Lower lobe of right lung (tissue), 2 donors: ENCODE measurements at regions of chr4 and their contacts with region 1.

Region 1: DNA sequence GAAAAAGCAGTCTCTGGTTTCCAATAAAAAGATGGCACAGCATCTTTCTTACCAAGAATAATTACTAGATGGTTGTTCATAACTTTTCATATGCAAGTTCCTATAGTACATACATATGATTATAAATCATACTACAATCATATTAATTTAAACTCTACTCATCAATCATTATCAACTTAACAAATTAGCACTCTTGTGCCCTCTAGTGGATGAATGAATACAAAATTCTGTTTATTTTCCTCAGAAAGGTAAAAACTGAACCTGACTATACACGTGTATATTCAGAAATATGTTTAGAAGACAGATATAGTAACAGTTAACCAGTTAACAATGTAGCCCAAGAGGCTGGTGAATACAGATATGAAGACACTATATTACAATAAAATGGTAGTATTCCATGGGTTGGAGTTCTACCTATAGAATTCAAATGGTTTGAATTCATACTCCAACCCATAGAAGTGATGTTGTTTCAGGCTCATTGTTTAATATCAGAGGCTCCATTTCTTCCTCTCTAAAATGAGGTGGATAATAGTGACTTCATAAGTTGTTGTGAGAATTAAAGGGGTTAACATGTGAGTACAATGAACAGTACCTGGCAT is 100.0 kb downstream of the ADAMTS3 start:
- DNase-seq: no peak
- ATAC-seq: no peak
- H3K4me3 ChIP-seq: no peak overlapping the region
- H3K27ac ChIP-seq: no peak overlapping the region
- H3K4me1 ChIP-seq: no peaks in the 10 kb centered on the region
- H3K27me3 ChIP-seq: no peaks in the 10 kb centered on the region
- CTCF ChIP-seq: peak; percentile 51

Region 2: GRCh38 chr4:72194046-72194445 is 275.0 kb before region 1 on chr4:
- intact Hi-C with region 1: no loop called
- DNase-seq: no peak
- ATAC-seq: no peak
- H3K4me3 ChIP-seq: no peak overlapping the region
- H3K27ac ChIP-seq: no peak overlapping the region
- H3K4me1 ChIP-seq: no peaks in the 10 kb centered on the region
- H3K27me3 ChIP-seq: no peaks in the 10 kb centered on the region
- CTCF ChIP-seq: no peak

Region 3: DNA sequence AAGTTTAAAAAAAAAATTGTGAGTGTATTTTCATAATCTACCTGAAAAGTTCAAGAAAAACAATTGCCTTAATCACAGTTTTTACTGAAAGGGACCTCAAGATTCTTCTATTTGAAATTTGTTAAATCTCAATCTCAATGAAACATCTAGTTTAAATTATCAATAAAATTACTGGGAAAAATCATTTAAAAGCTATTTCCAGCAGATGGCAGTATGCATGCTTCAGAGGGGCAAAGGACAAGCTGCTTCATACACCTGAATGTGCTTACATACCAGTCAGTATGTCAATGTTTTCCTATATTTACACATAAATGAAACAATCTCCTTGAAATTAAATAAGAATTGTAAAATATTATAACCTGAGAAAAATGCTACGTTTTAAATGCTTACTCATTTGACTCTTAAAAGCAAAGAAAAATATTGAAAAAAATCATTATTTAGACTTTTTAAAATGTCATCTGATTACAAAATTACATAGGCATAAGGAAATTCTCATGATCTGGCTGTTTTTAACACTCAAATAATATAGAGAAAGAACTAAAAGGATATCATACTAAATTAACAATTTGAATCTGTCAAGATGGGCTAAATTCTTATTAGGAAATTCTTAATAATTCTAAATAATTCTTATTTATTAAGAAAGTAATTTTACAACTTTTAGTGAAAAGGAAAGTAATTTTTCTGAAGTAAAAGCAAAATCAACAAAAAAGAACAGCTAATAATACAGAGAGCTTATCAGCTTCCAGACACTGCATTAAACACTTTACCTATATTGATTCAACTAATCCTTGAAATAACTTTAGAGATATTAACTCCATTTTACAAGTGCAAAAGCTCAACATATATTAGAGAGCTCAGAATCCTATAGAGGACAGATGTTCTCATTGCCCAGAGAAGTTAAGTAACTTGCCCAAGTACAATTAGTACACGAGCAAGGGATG is 142.0 kb before region 1 on chr4:
- intact Hi-C with region 1: loop called (anchors 5 kb)
- DNase-seq: no peak
- ATAC-seq: no peak
- H3K4me3 ChIP-seq: no peak overlapping the region
- H3K27ac ChIP-seq: no peak overlapping the region
- H3K4me1 ChIP-seq: no peaks in the 10 kb centered on the region
- H3K27me3 ChIP-seq: no peaks in the 10 kb centered on the region
- CTCF ChIP-seq: peak; percentile 52

Region 4: DNA sequence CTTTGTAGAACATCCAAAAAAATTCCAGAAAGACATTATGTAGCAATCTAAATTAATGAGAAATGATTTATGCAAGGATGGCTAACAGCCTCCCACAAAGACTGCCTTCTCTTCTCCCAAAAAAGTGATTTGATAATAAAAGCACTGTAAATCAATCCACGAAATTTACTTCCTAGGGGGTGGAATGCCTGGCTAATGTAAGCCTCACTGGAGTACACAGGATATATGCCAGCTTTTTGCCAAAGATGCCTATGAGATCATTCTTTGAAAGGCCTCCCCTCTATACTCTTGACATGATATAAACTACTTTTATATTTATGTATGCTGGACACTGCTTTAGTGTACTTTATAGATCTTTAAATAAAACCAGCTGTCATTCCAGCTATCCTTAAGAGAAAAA is 111.1 kb before region 1 on chr4:
- intact Hi-C with region 1: no loop called
- DNase-seq: no peak
- ATAC-seq: no peak
- H3K4me3 ChIP-seq: no peak overlapping the region
- H3K27ac ChIP-seq: no peak overlapping the region
- H3K4me1 ChIP-seq: peaks cover under 1% of the 10 kb centered on the region
- H3K27me3 ChIP-seq: no peaks in the 10 kb centered on the region
- CTCF ChIP-seq: no peak